Ascending aorta (tissue), 2 donors: ENCODE measurements at regions of chr7 and their contacts with region 1.

Region 1: DNA sequence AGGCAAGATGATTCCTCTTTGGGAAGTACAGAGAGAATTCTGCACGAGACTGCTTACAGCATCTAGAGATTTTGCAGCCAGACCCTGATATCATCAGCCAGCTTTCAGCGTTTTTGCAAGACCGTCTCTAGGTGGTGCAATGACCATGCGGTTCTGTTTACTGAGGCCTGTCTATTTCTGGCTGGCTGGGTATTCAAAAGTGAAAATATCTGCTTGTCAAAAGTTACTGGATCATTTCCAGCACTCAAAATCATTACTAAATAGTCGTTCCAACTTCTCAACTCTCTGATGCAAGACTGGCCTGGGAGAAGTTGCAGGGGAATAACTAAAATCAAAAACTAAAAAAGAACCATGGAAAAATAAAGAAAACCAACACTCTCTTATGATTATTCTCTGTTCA is 240.1 kb downstream of the ELMO1 start:
- DNase-seq: peak in 1 of 2 donors; percentile 84
- H3K4me3 ChIP-seq: no peak overlapping the region
- H3K27ac ChIP-seq: peak overlapping the region; percentile 66 to 74
- H3K4me1 ChIP-seq: peaks cover 0 to 23% of the 10 kb centered on the region in 2 donors
- H3K27me3 ChIP-seq: no peaks in the 10 kb centered on the region
- CTCF ChIP-seq: peak in 2 of 3 experiments; percentile 26 to 48

Region 2: DNA sequence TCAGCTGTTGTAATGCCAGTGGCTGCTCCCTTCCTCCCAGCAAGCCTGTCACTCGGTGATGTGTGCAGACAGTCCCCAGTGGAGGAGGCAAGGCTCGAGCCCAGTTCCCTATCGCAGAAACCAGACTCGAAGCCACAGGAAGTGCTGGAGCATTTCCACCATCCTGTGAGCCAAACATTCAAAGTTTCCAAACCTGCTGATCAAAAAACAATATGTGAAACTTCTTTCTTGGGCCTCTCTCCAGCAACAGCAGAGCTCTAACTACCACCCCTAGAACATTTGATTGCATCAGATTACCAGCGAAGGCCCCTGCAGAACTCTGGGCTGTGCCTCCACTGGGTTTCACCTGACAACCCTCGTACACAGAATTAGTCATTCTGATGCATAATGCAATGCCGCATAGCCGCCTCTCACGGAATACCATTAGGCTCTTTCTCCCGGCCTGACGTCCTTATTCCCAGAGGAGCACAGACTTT is 146.2 kb after region 1 on chr7:
- intact Hi-C with region 1: loop called (anchors 5 kb)
- DNase-seq: peak; percentile 68 to 90
- H3K4me3 ChIP-seq: peak overlapping the region in 1 of 2 donors; percentile 7
- H3K27ac ChIP-seq: peak overlapping the region; percentile 82
- H3K4me1 ChIP-seq: peaks cover 8 to 20% of the 10 kb centered on the region in 2 donors
- H3K27me3 ChIP-seq: no peaks in the 10 kb centered on the region
- CTCF ChIP-seq: no peak